AG04449 (cell line): ENCODE measurements at regions of chr2 and their contacts with region 1.

Region 1: GRCh38 chr2:68467077-68467960 is at the starts of genes APLF and FBXO48:
- DNase-seq: peak; percentile 95
- H3K4me3 ChIP-seq: peak within 1 kb of the TSS; percentile 99
- CTCF ChIP-seq: no peak

Region 2: DNA sequence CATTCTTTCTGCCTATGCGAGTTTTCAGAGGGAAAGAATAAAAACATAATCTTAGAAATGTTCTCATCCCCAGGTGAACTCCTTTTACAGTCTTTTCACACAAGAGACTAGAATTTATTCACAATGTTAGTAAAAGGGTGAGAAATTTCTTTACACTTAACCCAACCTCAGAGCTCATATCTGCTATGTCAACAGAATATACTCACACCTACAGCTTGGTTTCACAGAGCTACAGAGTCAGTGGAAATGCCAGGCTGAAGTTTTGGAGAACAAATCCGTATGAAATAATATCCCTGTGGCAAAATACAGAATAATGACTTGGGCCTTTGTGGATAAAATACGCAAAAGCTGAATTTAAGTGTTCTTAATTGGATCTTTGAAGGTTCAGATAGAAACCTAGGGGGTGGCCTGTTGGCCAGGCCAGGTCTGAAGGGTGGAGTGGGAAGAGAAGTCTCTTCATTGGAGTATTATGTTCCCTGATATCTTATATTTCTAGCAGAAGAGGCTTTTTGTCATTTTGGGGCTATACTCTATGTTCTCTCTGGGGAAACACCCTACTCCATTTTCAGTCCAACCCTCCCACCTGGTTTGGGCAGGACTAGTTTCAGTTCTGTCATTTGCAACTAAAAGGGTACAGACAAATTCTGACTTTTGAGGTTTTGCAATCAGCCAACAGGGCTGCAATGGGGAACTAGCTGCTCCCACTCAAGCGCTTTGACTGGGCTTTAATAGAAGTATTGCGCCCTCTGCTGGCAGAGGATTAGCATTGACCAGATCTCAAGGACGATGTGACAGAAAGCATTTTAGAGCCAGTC is 25.9 kb before region 1 on chr2:
- CTCF ChIA-PET with region 1: interaction called, 52 read pairs
- POLR2A ChIA-PET with region 1: no interaction called
- DNase-seq: no peak
- H3K4me3 ChIP-seq: no peak overlapping the region
- CTCF ChIP-seq: peak; percentile 79

Region 3: GRCh38 chr2:68487773-68488355 is 20.5 kb after region 1 on chr2:
- CTCF ChIA-PET with region 1: interaction called, 12 read pairs
- POLR2A ChIA-PET with region 1: no interaction called
- DNase-seq: no peak
- H3K4me3 ChIP-seq: no peak overlapping the region
- CTCF ChIP-seq: no peak

Region 4: GRCh38 chr2:68709421-68709911 is 242.1 kb after region 1 on chr2:
- CTCF ChIA-PET with region 1: interaction called, 89 read pairs
- POLR2A ChIA-PET with region 1: no interaction called
- DNase-seq: no peak
- H3K4me3 ChIP-seq: no peak overlapping the region
- CTCF ChIP-seq: peak; percentile 62

Region 5: GRCh38 chr2:68807821-68808266 is 340.5 kb after region 1 on chr2:
- CTCF ChIA-PET with region 1: no interaction called
- POLR2A ChIA-PET with region 1: no interaction called
- DNase-seq: no peak
- H3K4me3 ChIP-seq: no peak overlapping the region
- CTCF ChIP-seq: no peak

Region 6: GRCh38 chr2:68837164-68837860 is 370.0 kb after region 1 on chr2:
- CTCF ChIA-PET with region 1: interaction called, 10 read pairs
- POLR2A ChIA-PET with region 1: no interaction called
- DNase-seq: no peak
- H3K4me3 ChIP-seq: no peak overlapping the region
- CTCF ChIP-seq: peak; percentile 72

Region 7: DNA sequence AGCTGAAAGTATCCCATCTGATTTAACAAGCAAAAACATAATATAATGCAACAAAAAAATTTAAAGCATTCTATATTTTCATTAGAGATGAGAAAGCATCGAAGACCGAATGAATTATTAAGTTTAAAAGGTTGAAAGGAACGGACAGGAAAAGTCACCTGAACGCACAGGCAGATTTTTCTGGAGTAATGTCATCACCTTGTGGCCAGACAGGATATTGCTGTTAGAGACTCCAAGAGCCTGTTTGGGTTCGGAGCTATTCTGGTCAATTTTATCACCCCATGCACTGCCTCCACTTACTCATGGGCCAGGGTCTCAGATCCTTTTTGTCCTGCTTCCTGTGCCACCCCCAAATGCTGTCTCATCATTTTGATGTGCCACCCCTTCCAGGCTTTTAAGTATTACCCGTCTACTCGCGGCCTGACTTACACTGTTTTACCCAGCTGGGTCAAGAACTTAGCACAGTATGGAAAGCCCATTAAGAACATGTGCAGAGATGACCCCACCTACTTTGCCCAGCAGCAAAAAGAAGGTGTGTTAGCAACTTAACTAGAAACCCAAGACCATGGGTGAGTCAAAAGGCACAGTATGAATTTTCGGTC is 458.1 kb after region 1 on chr2:
- CTCF ChIA-PET with region 1: interaction called, 39 read pairs
- POLR2A ChIA-PET with region 1: no interaction called
- DNase-seq: no peak
- H3K4me3 ChIP-seq: no peak overlapping the region
- CTCF ChIP-seq: peak; percentile 72